Transverse colon (tissue), 4 donors: ENCODE measurements at regions of chr17 and their contacts with region 1.

Region 1: GRCh38 chr17:39598047-39598481 is 9.7 kb downstream of the NEUROD2 start:
- DNase-seq: no peak
- H3K4me3 ChIP-seq: no peak overlapping the region
- H3K27ac ChIP-seq: no peak overlapping the region
- H3K4me1 ChIP-seq: peaks cover 3 to 15% (median 12%) of the 10 kb centered on the region in 4 donors
- H3K27me3 ChIP-seq: peaks cover 100% of the 10 kb centered on the region
- CTCF ChIP-seq: no peak
- EP300 ChIP-seq: no peak
- POLR2A ChIP-seq: no peak

Region 2: DNA sequence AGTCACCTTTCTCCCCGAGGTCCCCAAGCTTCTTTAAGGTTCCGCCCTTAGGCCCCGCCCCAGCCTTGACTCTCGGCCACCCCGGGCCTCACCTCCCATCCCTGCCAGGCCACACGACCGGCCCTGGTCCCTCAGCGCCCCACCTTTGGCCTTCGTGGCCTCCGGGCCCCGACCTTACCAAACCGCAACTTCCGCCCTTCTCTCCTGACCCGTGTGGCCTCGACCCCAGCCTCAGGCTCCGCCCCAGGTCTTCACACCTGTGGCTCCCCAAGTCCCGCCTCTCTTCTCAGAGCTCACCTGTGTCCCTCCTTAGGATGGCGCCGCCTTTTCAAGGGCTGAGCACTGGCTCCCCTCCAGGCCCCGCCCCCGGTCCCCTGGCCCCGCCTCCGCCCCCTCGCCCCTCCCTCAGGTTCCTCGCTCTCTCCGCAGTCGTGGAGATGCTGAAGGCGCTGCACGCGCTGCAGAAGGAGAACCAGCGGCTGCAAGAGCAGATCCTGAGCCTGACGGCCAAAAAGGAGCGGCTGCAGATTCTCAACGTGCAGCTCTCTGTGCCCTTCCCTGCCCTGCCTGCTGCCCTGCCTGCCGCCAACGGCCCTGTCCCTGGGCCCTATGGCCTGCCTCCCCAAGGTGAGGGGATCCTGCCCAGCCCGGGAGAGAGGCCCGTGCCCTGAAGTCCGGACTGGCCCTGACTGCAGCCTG is 878.0 kb before region 1 on chr17:
- in situ Hi-C with region 1: no loop called
- intact Hi-C with region 1: no loop called
- DNase-seq: no peak
- H3K4me3 ChIP-seq: no peak overlapping the region
- H3K27ac ChIP-seq: no peak overlapping the region
- H3K4me1 ChIP-seq: peaks cover 0 to 22% (median 12%) of the 10 kb centered on the region in 4 donors
- H3K27me3 ChIP-seq: no peaks in the 10 kb centered on the region
- CTCF ChIP-seq: no peak
- EP300 ChIP-seq: no peak
- POLR2A ChIP-seq: no peak

Region 3: DNA sequence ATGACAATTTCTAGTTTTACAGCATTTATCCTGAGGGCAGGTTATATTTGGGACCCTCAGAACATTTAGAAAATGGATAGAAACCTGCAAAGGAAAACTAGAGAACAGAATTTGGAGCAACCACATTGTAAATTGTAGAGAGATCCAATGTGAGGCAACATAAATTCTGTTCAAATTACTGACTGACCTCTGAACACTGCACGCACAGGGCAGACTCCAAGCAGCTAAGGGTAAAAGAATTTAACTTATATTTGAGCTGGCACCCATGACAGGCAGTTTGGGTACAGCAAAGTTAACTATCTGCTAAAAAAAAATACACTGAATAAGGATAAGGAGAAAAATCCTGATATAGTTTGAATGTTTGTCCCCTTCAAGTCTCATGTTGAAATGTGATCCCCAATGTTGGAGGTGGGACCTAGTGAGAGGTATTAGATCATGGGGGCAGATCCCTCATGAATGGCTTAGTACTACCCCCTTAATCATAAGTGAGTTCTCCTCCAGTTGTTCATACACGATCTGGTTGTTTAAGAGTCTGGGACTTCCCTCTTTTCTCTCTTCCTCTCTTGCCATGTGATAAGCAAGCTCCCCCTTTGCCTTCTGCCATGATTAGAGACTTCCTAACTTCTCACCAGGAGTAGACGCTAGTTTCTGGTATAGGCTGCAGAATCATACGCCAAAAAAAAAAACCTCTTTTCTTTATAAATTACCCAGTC is 272.4 kb before region 1 on chr17:
- in situ Hi-C with region 1: no loop called
- intact Hi-C with region 1: loop called (anchors 5 kb)
- DNase-seq: no peak
- H3K4me3 ChIP-seq: no peak overlapping the region
- H3K27ac ChIP-seq: no peak overlapping the region
- H3K4me1 ChIP-seq: peaks cover 0 to 13% (median 8%) of the 10 kb centered on the region in 4 donors
- H3K27me3 ChIP-seq: no peaks in the 10 kb centered on the region
- CTCF ChIP-seq: no peak
- EP300 ChIP-seq: no peak
- POLR2A ChIP-seq: no peak